ENCODE measurements at regions of chr20 and their contacts with region 1.

Region 1: DNA sequence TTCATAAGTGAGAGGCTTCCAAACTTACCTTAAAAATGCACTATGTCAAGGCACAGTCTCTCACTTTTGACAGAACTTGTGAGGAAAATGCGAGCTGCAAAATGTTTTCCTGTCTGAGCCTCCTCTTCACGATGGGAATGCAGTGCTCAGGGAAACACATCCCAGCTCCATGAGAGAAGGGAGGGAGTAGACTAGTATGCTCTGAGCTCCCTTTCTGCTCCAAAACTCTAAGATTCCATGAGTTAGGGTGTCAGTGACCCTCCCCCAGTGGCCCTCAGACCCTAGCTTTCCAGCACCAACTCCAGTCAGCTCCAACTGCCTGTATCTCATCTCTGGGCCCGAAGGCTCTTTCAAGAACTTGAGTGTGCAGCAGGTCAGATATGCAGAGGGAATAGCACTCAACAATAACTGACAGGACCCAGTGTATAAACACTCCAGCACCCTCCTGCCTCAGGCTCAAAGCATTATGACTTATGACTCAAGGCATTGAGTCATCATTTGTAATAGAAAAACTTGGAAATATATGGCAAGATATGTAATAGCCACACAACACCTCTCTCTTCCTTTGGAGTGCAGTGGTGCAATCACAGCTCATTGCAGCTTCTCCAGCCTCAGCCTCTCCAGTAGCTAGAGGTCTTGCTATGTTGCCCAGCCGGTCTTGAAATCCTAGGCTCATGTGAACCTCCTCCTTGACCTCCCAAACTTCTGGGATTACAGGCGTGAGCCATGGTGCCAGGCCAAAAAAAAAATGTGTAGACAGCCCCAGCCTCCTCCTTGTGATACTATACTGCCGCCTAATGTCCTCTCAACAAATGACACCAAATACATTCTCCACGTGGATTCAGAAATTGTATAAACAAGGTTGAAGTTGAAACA is 16.7 kb upstream of the ENTPD6 start:
- DNase-seq: peak; percentile 84 to 89
- ATAC-seq: peak; percentile 94 to 98
- H3K4me3 ChIP-seq: no peak overlapping the region
- H3K27ac ChIP-seq: peak overlapping the region; percentile 65 to 74
- H3K4me1 ChIP-seq: peaks cover 34% of the 10 kb centered on the region
- CTCF ChIP-seq: peak; percentile 99
- EP300 ChIP-seq: peak; percentile 41 to 73; a peak in 2 of 5 replicates
- POLR2A ChIP-seq: no peak
- RAD21 ChIP-seq: peak; percentile 100

Region 2: DNA sequence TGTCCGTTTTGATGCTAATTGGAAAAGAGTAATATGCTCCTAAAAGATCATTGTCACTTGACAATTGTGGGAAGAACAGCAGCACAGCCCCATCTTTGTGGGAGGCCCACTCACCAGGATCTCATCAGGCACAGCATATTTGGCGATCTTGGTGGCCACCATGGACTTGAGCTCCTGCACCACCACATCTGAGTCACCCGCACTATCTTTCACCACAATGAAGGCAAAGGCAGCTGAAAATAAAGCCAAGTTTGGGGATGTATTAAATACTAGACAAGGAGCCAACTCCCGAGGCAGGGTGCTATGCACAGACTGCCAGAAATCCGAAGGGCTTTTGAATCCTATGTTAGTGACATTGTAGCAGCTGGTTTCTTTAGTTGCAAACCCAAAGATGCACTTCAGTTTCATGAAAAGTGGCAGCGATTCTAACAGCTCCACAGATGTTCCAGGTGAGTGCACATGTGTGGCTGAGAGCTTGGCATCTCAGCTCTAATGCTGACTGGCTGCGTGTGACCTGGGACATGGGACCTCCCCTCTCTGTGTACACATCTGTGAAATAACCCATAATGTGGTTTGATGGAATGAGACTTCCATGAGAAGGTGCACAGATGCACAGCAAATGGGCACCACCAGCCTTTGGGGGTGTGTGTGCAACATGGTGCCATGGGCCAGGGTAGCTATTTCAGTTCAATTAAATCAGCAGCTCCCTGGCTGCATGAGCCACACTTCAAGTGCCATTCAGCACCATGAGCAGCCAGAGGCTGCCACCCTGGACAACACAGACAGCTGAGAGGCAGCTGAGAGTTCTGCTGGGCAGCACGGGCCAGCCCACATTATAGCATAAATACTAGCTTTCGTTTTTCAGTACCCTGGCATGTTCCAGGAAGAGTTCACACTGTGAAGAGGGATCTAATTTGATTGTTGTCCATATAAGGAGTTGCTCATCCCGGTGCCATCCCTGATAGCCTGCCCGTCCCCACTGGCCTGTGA is 169.3 kb before region 1 on chr20:
- CTCF ChIA-PET with region 1: interaction called, 12 read pairs
- POLR2A ChIA-PET with region 1: no interaction called
- DNase-seq: no peak
- ATAC-seq: no peak
- H3K4me3 ChIP-seq: no peak overlapping the region
- H3K27ac ChIP-seq: no peak overlapping the region
- H3K4me1 ChIP-seq: peaks cover 7% of the 10 kb centered on the region; the same call in 1 of the 3 replicates
- CTCF ChIP-seq: no peak
- EP300 ChIP-seq: no peak
- POLR2A ChIP-seq: no peak
- RAD21 ChIP-seq: no peak

Region 3: DNA sequence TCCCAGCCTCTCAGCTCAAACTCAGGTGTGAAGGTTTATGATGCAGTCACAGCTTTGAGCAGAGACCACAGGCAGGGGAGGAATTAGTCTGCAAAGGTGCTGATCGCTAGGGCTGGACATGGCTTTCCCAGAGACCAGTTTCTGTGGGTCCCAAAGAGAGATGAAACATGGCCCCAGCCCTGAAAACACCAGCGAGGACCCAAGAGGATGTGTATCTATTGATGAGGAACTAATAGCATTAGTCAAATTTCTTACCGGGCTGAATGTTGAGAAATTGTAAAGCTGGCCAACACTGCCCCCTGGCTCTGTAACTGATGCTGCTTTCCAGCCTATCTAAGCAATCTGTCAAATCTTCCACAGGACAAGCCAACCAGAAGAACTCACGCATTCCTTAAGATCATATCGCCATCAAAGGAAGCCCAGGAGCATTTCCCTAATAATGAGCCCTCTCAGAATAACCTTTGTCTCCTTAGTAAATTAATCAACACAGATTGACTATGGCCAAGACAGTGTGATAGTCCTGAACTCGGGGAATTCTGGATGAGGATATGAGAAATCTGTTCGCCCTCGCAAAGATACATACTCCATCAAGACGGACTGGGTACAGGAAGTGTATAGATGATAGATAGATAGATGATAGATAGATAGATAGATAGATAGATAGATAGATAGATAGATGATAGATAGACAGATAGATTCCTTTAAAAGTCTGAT is 113.0 kb before region 1 on chr20:
- CTCF ChIA-PET with region 1: interaction called, 15 read pairs
- POLR2A ChIA-PET with region 1: no interaction called
- DNase-seq: peak; percentile 71 to 76
- ATAC-seq: peak; percentile 84 to 90
- H3K4me3 ChIP-seq: no peak overlapping the region
- H3K27ac ChIP-seq: no peak overlapping the region
- H3K4me1 ChIP-seq: peaks cover 13% of the 10 kb centered on the region; the same call in 2 of the 3 replicates
- CTCF ChIP-seq: peak; percentile 82
- EP300 ChIP-seq: no peak
- POLR2A ChIP-seq: no peak
- RAD21 ChIP-seq: peak; percentile 88 to 90

Region 4: DNA sequence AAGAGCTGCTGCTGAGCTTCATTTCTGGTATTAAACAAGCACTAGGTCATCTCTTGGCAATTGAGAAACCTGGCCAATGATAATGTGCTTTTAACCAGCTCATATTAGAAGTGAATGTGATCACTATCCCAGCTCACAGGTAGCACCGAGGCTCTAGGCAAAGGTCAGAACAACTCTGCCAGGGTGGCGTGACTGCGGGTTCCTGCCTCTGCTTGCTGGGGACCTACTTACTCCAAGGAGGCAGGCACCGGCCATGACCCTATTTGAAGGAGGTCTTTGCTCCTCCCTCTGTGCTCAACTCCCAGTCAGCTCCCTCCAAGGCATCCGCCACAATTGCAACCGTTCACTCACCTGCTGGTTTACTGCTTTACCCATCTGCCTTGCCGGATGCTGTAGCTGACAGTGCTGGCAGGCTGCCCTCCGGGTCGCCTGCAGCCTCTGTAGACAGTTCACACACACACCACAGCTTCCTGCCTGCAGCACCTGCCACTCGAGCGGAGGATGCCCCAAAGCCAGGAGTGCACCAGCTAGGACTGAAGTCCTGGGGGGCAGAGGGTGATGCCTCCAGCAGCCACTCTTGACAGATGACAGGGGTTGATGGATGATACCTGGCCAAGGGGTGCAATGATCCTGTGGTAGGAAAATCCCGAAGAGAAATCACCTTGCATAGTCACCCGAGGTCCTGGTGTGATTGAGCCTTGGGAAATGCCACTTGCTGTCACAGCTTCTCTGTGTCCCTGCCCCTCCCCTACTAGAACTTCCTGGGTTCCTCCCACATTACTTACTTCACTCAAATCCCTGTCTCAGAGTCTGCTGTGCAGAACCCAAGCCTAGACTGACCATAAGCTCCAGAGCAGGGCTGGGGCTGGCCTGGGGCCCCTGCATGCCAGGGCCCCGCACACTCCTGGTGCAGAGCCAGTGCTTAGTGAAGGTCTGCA is 88.0 kb before region 1 on chr20:
- CTCF ChIA-PET with region 1: interaction called, 16 read pairs
- POLR2A ChIA-PET with region 1: no interaction called
- DNase-seq: no peak
- ATAC-seq: peak in 1 of 2 experiments; percentile 34; a peak in 1 of 6 replicates
- H3K4me3 ChIP-seq: no peak overlapping the region
- H3K27ac ChIP-seq: no peak overlapping the region
- H3K4me1 ChIP-seq: no peaks in the 10 kb centered on the region
- CTCF ChIP-seq: no peak
- EP300 ChIP-seq: no peak
- POLR2A ChIP-seq: no peak
- RAD21 ChIP-seq: no peak

Region 5: GRCh38 chr20:25165128-25165527 is 13.7 kb before region 1 on chr20:
- CTCF ChIA-PET with region 1: interaction called, 17 read pairs
- POLR2A ChIA-PET with region 1: no interaction called
- DNase-seq: no peak
- ATAC-seq: no peak
- H3K4me3 ChIP-seq: no peak overlapping the region
- H3K27ac ChIP-seq: no peak overlapping the region
- H3K4me1 ChIP-seq: no peaks in the 10 kb centered on the region
- CTCF ChIP-seq: no peak
- EP300 ChIP-seq: no peak
- POLR2A ChIP-seq: no peak
- RAD21 ChIP-seq: no peak

Region 6: GRCh38 chr20:25247956-25248785 is 69.4 kb after region 1 on chr20 and contains the start of gene PYGB:
- CTCF ChIA-PET with region 1: interaction called, 18 read pairs
- POLR2A ChIA-PET with region 1: no interaction called
- DNase-seq: peak; percentile 89 to 94
- ATAC-seq: peak; percentile 68 to 80
- H3K4me3 ChIP-seq: peak within 1 kb of the TSS; percentile 82
- H3K27ac ChIP-seq: peak within 1 kb of the TSS; percentile 92 to 96
- H3K4me1 ChIP-seq: peaks cover 57% of the 10 kb centered on the region
- CTCF ChIP-seq: no peak
- EP300 ChIP-seq: no peak
- POLR2A ChIP-seq: peak; percentile 98
- RAD21 ChIP-seq: peak in 1 of 2 experiments; percentile 20; a peak in 3 of 5 replicates
- polyA plus RNA-seq, gene PYGB: 100 and 113 TPM in 2 replicates

Measured in A549 (cell line).